ENCODE measurements at regions of chr14 and their contacts with region 1.

Region 1: GRCh38 chr14:100417466-100417865 is 94.3 kb downstream of the SLC25A47 start:
- DNase-seq: peak; percentile 67
- H3K4me3 ChIP-seq: no peak overlapping the region
- H3K27ac ChIP-seq: no peak overlapping the region
- H3K4me1 ChIP-seq: peaks cover 16% of the 10 kb centered on the region
- H3K27me3 ChIP-seq: no peaks in the 10 kb centered on the region
- CTCF ChIP-seq: peak; percentile 54

Region 2: DNA sequence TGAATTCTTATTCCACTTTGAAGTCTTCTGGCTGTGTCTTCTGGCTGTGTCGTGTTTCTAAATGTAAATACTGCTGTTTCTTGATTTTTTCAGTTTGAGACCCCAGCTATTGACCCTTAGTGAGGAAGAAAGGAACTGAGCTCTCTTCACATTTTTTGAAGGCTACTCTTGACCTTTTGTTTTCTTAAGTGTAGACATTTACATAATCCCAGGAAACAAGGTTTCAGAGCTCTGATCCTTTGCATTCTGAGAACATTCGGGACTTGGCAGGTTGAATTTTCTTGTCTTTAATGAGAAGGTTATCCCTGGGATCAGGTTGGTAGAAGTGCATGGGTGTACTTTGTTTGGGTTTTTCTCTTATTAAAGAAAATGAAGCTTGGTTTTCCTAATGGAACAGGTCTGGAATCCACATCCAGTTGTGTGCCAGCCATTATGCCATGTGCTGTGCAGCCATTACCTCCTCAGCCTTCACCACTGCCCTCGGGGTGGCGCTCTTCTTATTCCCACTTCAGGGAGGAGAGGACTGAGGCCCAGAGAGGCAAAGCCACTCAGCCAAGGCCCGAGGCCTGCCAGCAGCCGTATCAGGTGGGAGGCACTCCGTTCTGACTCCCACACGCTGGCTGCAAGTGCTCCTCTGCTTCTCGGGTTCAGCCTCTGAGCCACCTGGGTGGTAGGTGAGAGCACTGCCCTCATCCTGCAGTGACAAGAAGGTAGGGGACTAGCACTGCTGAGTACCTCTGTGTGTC is 48.8 kb after region 1 on chr14:
- CTCF ChIA-PET with region 1: interaction called, 15 read pairs
- POLR2A ChIA-PET with region 1: no interaction called
- intact Hi-C with region 1: no loop called
- DNase-seq: no peak
- H3K4me3 ChIP-seq: no peak overlapping the region
- H3K27ac ChIP-seq: no peak overlapping the region
- H3K4me1 ChIP-seq: no peaks in the 10 kb centered on the region
- H3K27me3 ChIP-seq: no peaks in the 10 kb centered on the region
- CTCF ChIP-seq: no peak